SK-N-SH (cell line): ENCODE measurements at regions of chr21 and their contacts with region 1.

Region 1: DNA sequence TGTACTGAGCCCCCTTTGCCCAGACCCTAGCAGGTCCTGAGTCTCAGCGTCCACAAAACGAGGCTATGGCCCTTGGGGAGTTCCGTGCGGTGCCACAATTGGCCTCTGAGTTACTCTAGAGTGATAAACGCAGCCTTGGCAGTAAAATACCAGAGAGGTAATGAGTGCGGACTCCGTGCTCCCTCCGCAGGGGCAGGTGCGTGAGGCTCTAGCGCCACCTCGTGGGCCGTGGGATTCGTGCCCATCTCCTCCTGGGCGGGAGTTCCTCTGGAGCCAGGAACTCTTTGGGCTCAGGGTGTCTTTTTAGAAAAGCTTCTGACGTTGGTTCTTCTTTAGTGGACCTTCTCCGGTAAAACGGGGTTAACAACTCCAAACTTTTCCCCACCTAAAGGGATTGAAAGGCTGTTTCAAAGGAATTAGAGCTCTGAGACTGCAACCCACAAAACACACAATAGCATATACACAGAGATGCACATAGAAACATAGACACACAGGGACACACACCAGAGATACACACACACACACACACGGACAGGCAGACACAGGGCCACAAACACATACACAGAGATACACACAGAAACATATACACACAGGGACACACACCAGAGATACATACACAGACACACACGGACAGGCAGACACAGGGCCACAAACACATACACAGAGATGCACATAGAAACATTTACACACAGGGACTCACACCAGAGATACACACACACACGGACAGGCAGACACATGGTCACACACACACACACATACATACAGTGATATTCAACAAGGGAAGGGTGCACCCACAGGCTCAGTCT is 99.4 kb downstream of the KCNJ15 start:
- DNase-seq: peak; percentile 85
- H3K4me3 ChIP-seq: peak overlapping the region in 1 of 2 experiments; percentile 25; a peak in 1 of 4 replicates
- H3K27ac ChIP-seq: no peak overlapping the region
- H3K4me1 ChIP-seq: no peaks in the 10 kb centered on the region; a peak in 1 of 4 replicates
- H3K27me3 ChIP-seq: no peaks in the 10 kb centered on the region
- CTCF ChIP-seq: peak; percentile 97
- EP300 ChIP-seq: no peak
- RAD21 ChIP-seq: peak; percentile 95

Region 2: DNA sequence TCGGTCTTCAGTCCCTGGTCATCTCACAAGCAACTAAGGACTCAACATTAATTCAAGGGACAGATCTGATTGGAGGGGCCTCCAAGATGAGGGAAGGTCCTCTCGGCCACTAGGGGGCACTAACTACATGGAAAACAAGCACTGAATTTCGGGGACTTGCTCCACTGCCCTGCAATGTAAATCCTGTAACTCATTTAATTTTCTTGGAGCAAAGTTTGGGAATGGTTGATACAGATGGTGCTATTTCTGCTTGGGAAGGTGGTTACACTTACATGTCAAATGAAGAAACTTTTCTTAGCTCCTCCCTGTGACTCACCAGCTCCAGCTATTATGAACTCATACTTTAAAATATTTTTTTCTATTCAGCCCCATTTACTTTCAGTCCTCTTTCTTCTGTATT is 196.8 kb before region 1 on chr21:
- CTCF ChIA-PET with region 1: interaction called, 45 read pairs
- POLR2A ChIA-PET with region 1: no interaction called
- DNase-seq: peak; percentile 57
- H3K4me3 ChIP-seq: no peak overlapping the region; a peak in 1 of 4 replicates
- H3K27ac ChIP-seq: no peak overlapping the region
- H3K4me1 ChIP-seq: no peaks in the 10 kb centered on the region
- H3K27me3 ChIP-seq: peaks cover 5% of the 10 kb centered on the region; the same call in 1 of the 2 replicates
- CTCF ChIP-seq: peak; percentile 96
- EP300 ChIP-seq: no peak
- RAD21 ChIP-seq: peak; percentile 75

Region 3: GRCh38 chr21:38170280-38170679 is 185.9 kb before region 1 on chr21:
- CTCF ChIA-PET with region 1: interaction called, 28 read pairs
- POLR2A ChIA-PET with region 1: no interaction called
- DNase-seq: no peak
- H3K4me3 ChIP-seq: no peak overlapping the region
- H3K27ac ChIP-seq: no peak overlapping the region
- H3K4me1 ChIP-seq: peaks cover 0 to 10% of the 10 kb centered on the region in 2 experiments; a peak in 1 of 4 replicates
- H3K27me3 ChIP-seq: no peaks in the 10 kb centered on the region
- CTCF ChIP-seq: peak; percentile 51
- EP300 ChIP-seq: no peak
- RAD21 ChIP-seq: peak; percentile 37; the same call in 1 of the 2 replicates

Region 4: DNA sequence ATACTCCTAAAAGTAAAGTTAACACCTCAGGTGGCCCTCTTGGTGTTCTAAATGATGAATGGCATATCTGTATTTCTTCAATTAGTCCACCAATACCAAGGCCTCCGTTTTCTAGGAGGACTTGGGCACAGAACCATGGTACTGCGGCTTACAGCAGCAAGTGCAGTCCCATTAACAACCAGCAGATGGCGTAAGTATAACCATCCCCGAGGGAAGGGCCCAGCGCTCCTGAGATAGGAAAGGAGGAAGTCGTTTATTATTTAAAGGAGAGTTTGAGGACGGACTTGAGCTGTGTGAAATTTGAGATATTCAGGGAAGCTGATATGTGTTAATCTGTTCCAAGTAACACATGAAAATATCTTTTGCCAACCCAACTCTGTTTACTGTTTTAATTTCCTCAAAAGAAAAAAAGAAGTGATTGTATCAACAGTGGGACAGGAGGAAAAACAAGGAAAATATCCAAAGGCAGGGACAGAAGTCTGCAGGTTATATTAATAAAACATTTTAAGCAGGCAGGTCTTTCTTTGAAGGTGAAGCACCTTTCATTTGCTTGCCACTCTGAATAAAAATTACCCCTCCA is 137.1 kb before region 1 on chr21:
- CTCF ChIA-PET with region 1: interaction called, 64 read pairs
- POLR2A ChIA-PET with region 1: interaction called, 3 read pairs
- DNase-seq: peak; percentile 58
- H3K4me3 ChIP-seq: no peak overlapping the region
- H3K27ac ChIP-seq: no peak overlapping the region
- H3K4me1 ChIP-seq: no peaks in the 10 kb centered on the region
- H3K27me3 ChIP-seq: no peaks in the 10 kb centered on the region
- CTCF ChIP-seq: peak; percentile 97
- EP300 ChIP-seq: no peak
- RAD21 ChIP-seq: peak; percentile 73

Region 5: DNA sequence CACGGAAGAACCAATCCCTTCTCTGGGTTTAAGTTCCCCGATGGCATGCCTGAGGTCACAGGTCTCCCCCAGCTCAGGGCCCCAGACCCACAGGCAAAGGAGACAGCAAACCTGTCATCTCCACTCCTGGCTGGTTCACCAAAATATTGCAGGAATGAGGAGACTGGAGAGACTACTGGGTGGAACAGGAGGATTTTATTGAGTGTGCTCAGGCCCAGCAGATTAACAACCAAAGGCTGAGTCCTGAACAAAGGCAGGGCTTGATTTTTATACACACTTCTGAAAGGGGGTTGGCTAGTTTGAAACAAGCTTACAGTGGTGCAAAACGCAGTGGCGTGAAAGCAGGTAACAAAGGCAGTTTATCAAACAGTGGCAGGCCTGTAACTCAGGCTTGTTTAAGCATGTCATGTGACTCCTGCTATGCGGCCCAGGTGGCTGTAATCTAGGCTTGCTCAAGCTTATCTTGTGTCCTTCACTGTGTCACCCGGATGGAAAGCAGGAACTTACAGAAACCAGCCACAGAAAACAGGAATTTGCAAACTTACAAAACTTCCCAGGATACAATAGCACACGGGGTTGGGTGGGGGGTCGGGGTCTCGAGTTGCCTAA is 126.8 kb before region 1 on chr21:
- CTCF ChIA-PET with region 1: interaction called, 15 read pairs
- POLR2A ChIA-PET with region 1: no interaction called
- DNase-seq: no peak
- H3K4me3 ChIP-seq: no peak overlapping the region
- H3K27ac ChIP-seq: no peak overlapping the region
- H3K4me1 ChIP-seq: no peaks in the 10 kb centered on the region
- H3K27me3 ChIP-seq: no peaks in the 10 kb centered on the region
- CTCF ChIP-seq: no peak
- EP300 ChIP-seq: no peak
- RAD21 ChIP-seq: no peak

Region 6: GRCh38 chr21:38376235-38376634 is 20.0 kb after region 1 on chr21:
- CTCF ChIA-PET with region 1: interaction called, 15 read pairs
- POLR2A ChIA-PET with region 1: no interaction called
- DNase-seq: no peak
- H3K4me3 ChIP-seq: no peak overlapping the region
- H3K27ac ChIP-seq: no peak overlapping the region
- H3K4me1 ChIP-seq: peaks cover 0 to 25% of the 10 kb centered on the region in 2 experiments; a peak in 2 of 4 replicates
- H3K27me3 ChIP-seq: no peaks in the 10 kb centered on the region
- CTCF ChIP-seq: no peak
- EP300 ChIP-seq: no peak
- RAD21 ChIP-seq: no peak

Region 7: DNA sequence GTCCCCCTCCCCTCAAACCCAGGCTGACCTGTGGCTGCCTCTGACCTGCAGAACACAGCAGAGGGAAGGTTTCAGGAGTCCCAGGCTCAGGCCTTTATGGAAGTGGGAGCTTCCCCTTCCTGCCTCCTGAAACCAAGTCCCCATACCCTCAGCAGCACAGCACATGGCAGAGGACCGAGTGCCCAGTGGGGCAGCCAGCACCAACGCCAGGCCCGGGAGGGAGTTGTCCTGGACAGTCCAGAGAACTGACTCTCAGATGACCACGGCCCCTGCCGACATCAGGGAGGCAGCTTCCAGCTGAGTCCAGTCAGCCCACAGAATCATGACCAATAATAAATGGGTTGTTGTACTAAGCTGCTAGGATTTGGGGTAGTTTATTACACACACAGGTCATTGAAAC is 221.7 kb after region 1 on chr21:
- CTCF ChIA-PET with region 1: no interaction called
- POLR2A ChIA-PET with region 1: no interaction called
- DNase-seq: no peak
- H3K4me3 ChIP-seq: no peak overlapping the region
- H3K27ac ChIP-seq: no peak overlapping the region
- H3K4me1 ChIP-seq: no peaks in the 10 kb centered on the region; a peak in 1 of 4 replicates
- H3K27me3 ChIP-seq: peaks cover 6% of the 10 kb centered on the region; the same call in 1 of the 2 replicates
- CTCF ChIP-seq: no peak
- EP300 ChIP-seq: no peak
- RAD21 ChIP-seq: no peak

Region 8: DNA sequence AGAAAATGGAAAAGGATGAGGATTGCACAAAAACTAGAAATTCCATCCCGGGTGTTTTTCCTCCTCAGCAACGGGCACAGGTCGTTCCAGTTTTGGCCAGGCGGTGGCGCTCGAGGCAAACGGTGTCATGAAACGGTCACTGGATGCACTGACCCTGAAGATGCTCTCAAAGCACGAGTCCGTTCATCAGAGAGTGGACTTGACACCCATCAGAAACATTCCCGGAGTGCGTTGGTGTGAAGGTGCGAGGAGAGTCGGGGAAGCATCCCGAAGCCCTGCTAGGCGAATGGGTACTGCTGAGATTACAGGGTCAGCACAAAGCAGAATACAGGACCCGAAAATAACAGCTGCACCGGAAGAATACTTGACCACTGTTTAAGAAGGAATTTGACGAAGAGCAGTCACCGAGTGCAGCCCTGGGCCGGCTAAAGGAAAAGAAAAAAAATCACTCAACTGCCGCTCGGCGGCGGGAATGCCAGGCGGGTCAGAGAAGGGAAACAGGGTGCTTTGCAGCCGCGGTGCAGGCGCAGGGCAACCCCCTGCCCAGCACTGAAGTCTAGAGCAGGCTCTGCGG is 377.9 kb after region 1 on chr21:
- CTCF ChIA-PET with region 1: no interaction called
- POLR2A ChIA-PET with region 1: no interaction called
- DNase-seq: peak; percentile 81
- H3K4me3 ChIP-seq: peak overlapping the region; percentile 30 to 51
- H3K27ac ChIP-seq: peak overlapping the region; percentile 5 to 78; a peak in 3 of 4 replicates
- H3K4me1 ChIP-seq: peaks cover 5 to 6% of the 10 kb centered on the region in 2 experiments; a peak in 3 of 4 replicates
- H3K27me3 ChIP-seq: no peaks in the 10 kb centered on the region
- CTCF ChIP-seq: peak; percentile 94
- EP300 ChIP-seq: peak in 1 of 2 experiments; percentile 18; a peak in 1 of 4 replicates
- RAD21 ChIP-seq: peak; percentile 99